IMR-90 (cell line): ENCODE measurements at regions of chr15 and their contacts with region 1.

Region 1: GRCh38 chr15:92714477-92715401 is 59.2 kb upstream of the FAM174B start:
- DNase-seq: peak; percentile 66
- ATAC-seq: peak; percentile 94
- H3K4me3 ChIP-seq: peak overlapping the region; percentile 50
- H3K27ac ChIP-seq: no peak overlapping the region
- H3K4me1 ChIP-seq: no peaks in the 10 kb centered on the region; the same call in 1 of the 2 replicates
- H3K27me3 ChIP-seq: no peaks in the 10 kb centered on the region; the same call in 1 of the 2 replicates
- CTCF ChIP-seq: peak; percentile 90
- POLR2A ChIP-seq: no peak
- RAD21 ChIP-seq: peak; percentile 81

Region 2: DNA sequence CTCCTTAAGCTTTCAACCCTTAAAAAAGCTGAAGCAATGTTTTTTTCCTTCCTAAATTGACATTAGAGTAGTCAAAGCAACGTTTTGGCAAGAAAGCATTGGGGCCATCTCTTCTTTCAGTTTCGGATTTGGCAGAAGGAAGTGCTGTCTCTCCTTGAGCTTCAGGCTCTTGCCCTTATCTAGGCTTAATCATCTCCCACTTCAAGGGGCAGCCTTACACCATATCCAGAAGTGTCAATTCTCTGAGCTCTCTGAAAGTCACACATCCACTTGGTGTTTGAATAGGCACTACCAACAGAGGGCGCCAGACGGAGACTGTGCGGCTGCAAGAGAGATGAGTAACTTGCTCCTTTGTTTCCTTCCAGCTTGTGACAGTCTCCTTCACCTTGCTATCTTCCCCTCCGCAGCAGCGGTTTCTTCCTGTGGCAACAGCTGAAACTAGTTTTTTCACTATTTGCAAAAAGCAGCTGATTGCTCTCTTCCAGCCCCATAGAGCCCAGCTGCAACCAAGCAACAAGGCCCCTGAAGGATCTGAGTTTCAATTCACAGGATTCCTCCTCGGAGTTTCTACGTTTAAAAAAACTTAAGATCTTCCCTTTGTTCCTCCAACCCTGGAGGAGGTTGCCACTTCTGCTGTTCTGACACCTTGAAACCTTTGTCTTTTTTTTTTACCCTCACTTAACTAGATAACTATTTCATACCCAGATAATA is 1008.3 kb before region 1 on chr15:
- CTCF ChIA-PET with region 1: no interaction called
- POLR2A ChIA-PET with region 1: no interaction called
- dilution Hi-C with region 1: no loop called
- in situ Hi-C with region 1: no loop called
- intact Hi-C with region 1: loop called (anchors 10 kb)
- DNase-seq: peak; percentile 63
- ATAC-seq: peak; percentile 72
- H3K4me3 ChIP-seq: no peak overlapping the region
- H3K27ac ChIP-seq: no peak overlapping the region
- H3K4me1 ChIP-seq: no peaks in the 10 kb centered on the region
- H3K27me3 ChIP-seq: no peaks in the 10 kb centered on the region
- CTCF ChIP-seq: peak; percentile 71
- POLR2A ChIP-seq: no peak
- RAD21 ChIP-seq: peak; percentile 62

Region 3: DNA sequence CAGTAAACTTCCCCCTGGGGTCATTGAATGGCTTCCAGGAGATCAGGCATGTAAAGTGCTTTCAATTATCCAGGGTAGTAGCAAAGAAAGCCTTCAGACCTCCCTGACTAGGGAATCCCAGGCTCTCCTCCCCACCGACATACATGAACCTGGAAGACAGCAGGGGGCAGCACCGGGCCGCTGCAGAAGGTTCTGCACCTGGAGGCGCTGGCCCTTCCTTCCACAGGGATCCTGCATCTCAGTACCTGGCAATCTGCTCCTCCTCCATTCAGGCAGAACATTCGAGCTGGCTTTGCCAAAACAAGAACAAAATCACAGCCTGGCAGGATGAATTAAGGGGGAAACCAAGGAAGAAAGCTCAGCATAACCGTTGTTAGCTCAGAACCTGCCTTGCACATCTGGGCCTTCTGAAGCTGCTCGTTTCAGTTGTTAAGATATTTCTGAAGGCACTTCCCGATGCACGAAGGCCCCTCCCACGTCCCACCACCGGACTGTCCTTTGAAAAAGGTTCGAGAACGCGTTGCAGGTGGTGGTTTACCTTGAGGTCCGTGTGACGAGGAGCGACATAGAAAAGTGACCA is 623.5 kb before region 1 on chr15:
- CTCF ChIA-PET with region 1: interaction called, 4 read pairs
- POLR2A ChIA-PET with region 1: no interaction called
- dilution Hi-C with region 1: no loop called
- in situ Hi-C with region 1: loop called (anchors 5 kb)
- intact Hi-C with region 1: no loop called
- DNase-seq: peak; percentile 11
- ATAC-seq: peak; percentile 75; the same call in 1 of the 2 replicates
- H3K4me3 ChIP-seq: no peak overlapping the region
- H3K27ac ChIP-seq: no peak overlapping the region
- H3K4me1 ChIP-seq: no peaks in the 10 kb centered on the region
- H3K27me3 ChIP-seq: no peaks in the 10 kb centered on the region
- CTCF ChIP-seq: peak; percentile 59
- POLR2A ChIP-seq: no peak
- RAD21 ChIP-seq: peak; percentile 51

Region 4: GRCh38 chr15:92391640-92392039 is 323.1 kb before region 1 on chr15:
- CTCF ChIA-PET with region 1: no interaction called
- POLR2A ChIA-PET with region 1: no interaction called
- dilution Hi-C with region 1: no loop called
- in situ Hi-C with region 1: no loop called
- intact Hi-C with region 1: loop called (anchors 1 kb)
- DNase-seq: peak; percentile 1
- ATAC-seq: no peak
- H3K4me3 ChIP-seq: no peak overlapping the region
- H3K27ac ChIP-seq: no peak overlapping the region
- H3K4me1 ChIP-seq: no peaks in the 10 kb centered on the region
- H3K27me3 ChIP-seq: peaks cover 25% of the 10 kb centered on the region
- CTCF ChIP-seq: 0 out of 2 replicates have a peak, but pooled peaks have one; percentile 14
- POLR2A ChIP-seq: no peak
- RAD21 ChIP-seq: no peak

Region 5: GRCh38 chr15:92617549-92618520 is 96.9 kb before region 1 on chr15:
- CTCF ChIA-PET with region 1: no interaction called
- POLR2A ChIA-PET with region 1: no interaction called
- dilution Hi-C with region 1: no loop called
- in situ Hi-C with region 1: no loop called
- intact Hi-C with region 1: loop called (anchors 10 kb)
- DNase-seq: peak; percentile 57
- ATAC-seq: peak; percentile 71
- H3K4me3 ChIP-seq: no peak overlapping the region
- H3K27ac ChIP-seq: no peak overlapping the region
- H3K4me1 ChIP-seq: peaks cover 5% of the 10 kb centered on the region; the same call in 1 of the 2 replicates
- H3K27me3 ChIP-seq: no peaks in the 10 kb centered on the region
- CTCF ChIP-seq: no peak
- POLR2A ChIP-seq: no peak
- RAD21 ChIP-seq: no peak

Region 6: GRCh38 chr15:92889390-92890107 is 174.8 kb after region 1 on chr15:
- CTCF ChIA-PET with region 1: no interaction called
- POLR2A ChIA-PET with region 1: no interaction called
- dilution Hi-C with region 1: no loop called
- in situ Hi-C with region 1: no loop called
- intact Hi-C with region 1: no loop called
- DNase-seq: no peak
- ATAC-seq: no peak
- H3K4me3 ChIP-seq: no peak overlapping the region
- H3K27ac ChIP-seq: no peak overlapping the region
- H3K4me1 ChIP-seq: no peaks in the 10 kb centered on the region; the same call in 1 of the 2 replicates
- H3K27me3 ChIP-seq: no peaks in the 10 kb centered on the region
- CTCF ChIP-seq: no peak
- POLR2A ChIP-seq: no peak
- RAD21 ChIP-seq: no peak